CD4-positive, alpha-beta T cell (primary cell): ENCODE measurements at regions of chr6 and their contacts with region 1.

Region 1: DNA sequence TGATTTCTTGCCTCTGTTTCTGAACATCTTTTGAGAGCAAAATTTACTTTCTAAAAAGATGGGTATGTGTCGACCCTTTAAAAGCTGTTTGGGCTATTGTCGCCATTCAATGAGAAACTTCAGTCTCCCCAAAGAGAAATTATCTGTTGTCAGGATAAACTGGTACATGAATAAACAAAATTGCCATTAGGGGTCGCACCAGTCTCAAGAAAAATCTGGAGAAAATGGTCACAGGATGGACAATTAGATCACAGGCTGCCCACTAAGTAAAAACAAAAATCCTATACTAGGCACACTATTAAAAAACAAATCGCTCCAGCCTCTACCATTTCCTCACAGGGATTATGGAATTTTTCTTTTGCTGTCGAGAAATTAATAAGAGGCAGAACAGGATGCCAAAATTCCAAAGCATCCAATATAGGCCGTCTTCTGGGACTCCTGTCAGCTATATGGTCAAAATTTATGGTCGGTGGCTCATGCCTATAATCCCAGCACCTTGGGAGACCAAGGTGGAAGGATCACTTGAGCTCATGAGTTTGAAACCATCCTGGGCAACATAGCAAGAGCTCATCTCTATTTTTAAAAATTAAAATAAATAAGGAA is 5.5 kb upstream of the HLA-E start:
- DNase-seq: peak in 5 of 14 experiments; percentile 17 to 78 (median 68)
- ATAC-seq: no peak
- H3K4me3 ChIP-seq: no peak overlapping the region
- H3K4me3 Mint-ChIP-seq: no peak overlapping the region
- H3K27ac ChIP-seq: no peak overlapping the region
- H3K27ac Mint-ChIP-seq: no peak overlapping the region
- H3K4me1 ChIP-seq: peaks cover 36% of the 10 kb centered on the region
- H3K4me1 Mint-ChIP-seq: peaks cover 44% of the 10 kb centered on the region
- H3K27me3 ChIP-seq: peaks cover 18 to 28% of the 10 kb centered on the region in 2 experiments
- H3K27me3 Mint-ChIP-seq: peaks cover 42% of the 10 kb centered on the region
- CTCF ChIP-seq: peak; percentile 94

Region 2: GRCh38 chr6:30463651-30464618 is 19.8 kb before region 1 on chr6:
- CTCF ChIA-PET with region 1: interaction called, 10 read pairs
- POLR2A ChIA-PET with region 1: interaction called, 5 read pairs
- intact Hi-C with region 1: no loop called
- DNase-seq: peak in 13 of 14 experiments; percentile 31 to 87 (median 59)
- ATAC-seq: peak; percentile 50
- H3K4me3 ChIP-seq: peak overlapping the region; percentile 35
- H3K4me3 Mint-ChIP-seq: peak overlapping the region; percentile 47
- H3K27ac ChIP-seq: no peak overlapping the region
- H3K27ac Mint-ChIP-seq: no peak overlapping the region
- H3K4me1 ChIP-seq: peaks cover 58% of the 10 kb centered on the region
- H3K4me1 Mint-ChIP-seq: peaks cover 54% of the 10 kb centered on the region
- H3K27me3 ChIP-seq: peaks cover 78 to 93% of the 10 kb centered on the region in 2 experiments
- H3K27me3 Mint-ChIP-seq: peaks cover 90% of the 10 kb centered on the region
- CTCF ChIP-seq: no peak

Region 3: GRCh38 chr6:30556066-30556905 is 72.5 kb after region 1 on chr6 and contains the start of gene GNL1:
- CTCF ChIA-PET with region 1: interaction called, 7 read pairs
- POLR2A ChIA-PET with region 1: interaction called, 12 read pairs
- intact Hi-C with region 1: no loop called
- DNase-seq: peak; percentile 98 to 100 (median 99)
- ATAC-seq: peak; percentile 88
- H3K4me3 ChIP-seq: peak within 1 kb of the TSS; percentile 86
- H3K4me3 Mint-ChIP-seq: peak within 1 kb of the TSS; percentile 98
- H3K27ac ChIP-seq: peak within 1 kb of the TSS; percentile 94 to 97
- H3K27ac Mint-ChIP-seq: peak within 1 kb of the TSS; percentile 97
- H3K4me1 ChIP-seq: peaks cover 27% of the 10 kb centered on the region
- H3K4me1 Mint-ChIP-seq: peaks cover 50% of the 10 kb centered on the region
- H3K27me3 ChIP-seq: no peaks in the 10 kb centered on the region
- H3K27me3 Mint-ChIP-seq: no peaks in the 10 kb centered on the region
- CTCF ChIP-seq: no peak
- total RNA-seq, gene GNL1: 145 to 151 TPM

Region 4: GRCh38 chr6:30640476-30640875 is 156.7 kb after region 1 on chr6:
- CTCF ChIA-PET with region 1: no interaction called
- POLR2A ChIA-PET with region 1: no interaction called
- intact Hi-C with region 1: no loop called
- DNase-seq: peak in 1 of 14 experiments; percentile 29
- ATAC-seq: peak; percentile 37
- H3K4me3 ChIP-seq: no peak overlapping the region
- H3K4me3 Mint-ChIP-seq: no peak overlapping the region
- H3K27ac ChIP-seq: no peak overlapping the region
- H3K27ac Mint-ChIP-seq: no peak overlapping the region
- H3K4me1 ChIP-seq: peaks cover 6% of the 10 kb centered on the region
- H3K4me1 Mint-ChIP-seq: peaks cover 13% of the 10 kb centered on the region
- H3K27me3 ChIP-seq: no peaks in the 10 kb centered on the region
- H3K27me3 Mint-ChIP-seq: no peaks in the 10 kb centered on the region
- CTCF ChIP-seq: no peak

Region 5: DNA sequence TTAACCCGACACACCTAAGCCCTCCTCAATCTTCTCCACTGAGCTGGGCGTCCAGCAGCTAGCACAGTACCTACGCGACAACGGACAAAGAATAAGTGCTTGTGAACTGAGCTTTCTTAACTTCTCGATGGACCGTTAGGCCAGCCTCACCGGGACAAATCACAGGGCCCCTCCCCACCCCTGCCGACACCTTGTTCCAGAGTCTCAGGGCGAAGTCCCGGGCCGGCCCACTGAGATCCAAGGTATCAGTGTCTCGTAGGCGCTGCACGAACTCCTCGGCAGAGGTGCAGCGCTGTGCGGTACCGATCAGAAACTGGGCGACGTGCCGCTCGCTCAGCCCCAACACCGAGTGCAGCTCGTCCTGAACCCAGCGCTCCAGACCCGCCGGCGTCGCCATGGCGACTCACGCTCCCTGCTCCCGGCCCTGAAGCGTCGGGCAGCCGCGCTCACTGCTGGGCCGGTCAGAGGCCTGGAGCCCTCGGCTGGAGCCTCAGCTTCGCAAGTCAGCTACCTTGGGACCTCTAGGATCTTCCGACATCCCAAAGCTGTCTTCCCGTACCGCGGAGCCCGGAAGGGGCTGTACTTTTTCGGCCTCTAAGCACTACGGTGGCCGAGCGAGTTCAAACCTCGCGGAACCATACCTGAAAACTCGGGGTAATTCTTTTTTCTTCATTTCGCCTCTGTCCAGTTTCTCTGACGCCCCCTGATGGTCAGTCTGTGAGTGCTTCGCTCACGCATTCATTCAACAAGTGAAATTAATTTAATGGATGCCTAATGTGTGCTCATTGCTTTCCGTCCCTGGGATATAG is 188.9 kb after region 1 on chr6 and contains the start of gene DHX16:
- CTCF ChIA-PET with region 1: interaction called, 11 read pairs
- POLR2A ChIA-PET with region 1: no interaction called
- intact Hi-C with region 1: loop called (anchors 2 kb)
- DNase-seq: peak; percentile 79 to 95 (median 84)
- ATAC-seq: peak; percentile 76
- H3K4me3 ChIP-seq: peak within 1 kb of the TSS; percentile 98
- H3K4me3 Mint-ChIP-seq: peak within 1 kb of the TSS; percentile 87
- H3K27ac ChIP-seq: peak within 1 kb of the TSS; percentile 49 to 59
- H3K27ac Mint-ChIP-seq: peak within 1 kb of the TSS; percentile 86
- H3K4me1 ChIP-seq: peaks cover 18% of the 10 kb centered on the region
- H3K4me1 Mint-ChIP-seq: peaks cover 49% of the 10 kb centered on the region
- H3K27me3 ChIP-seq: no peaks in the 10 kb centered on the region
- H3K27me3 Mint-ChIP-seq: no peaks in the 10 kb centered on the region
- CTCF ChIP-seq: peak; percentile 69
- total RNA-seq, gene DHX16: 15.9 to 16.1 TPM

Region 6: DNA sequence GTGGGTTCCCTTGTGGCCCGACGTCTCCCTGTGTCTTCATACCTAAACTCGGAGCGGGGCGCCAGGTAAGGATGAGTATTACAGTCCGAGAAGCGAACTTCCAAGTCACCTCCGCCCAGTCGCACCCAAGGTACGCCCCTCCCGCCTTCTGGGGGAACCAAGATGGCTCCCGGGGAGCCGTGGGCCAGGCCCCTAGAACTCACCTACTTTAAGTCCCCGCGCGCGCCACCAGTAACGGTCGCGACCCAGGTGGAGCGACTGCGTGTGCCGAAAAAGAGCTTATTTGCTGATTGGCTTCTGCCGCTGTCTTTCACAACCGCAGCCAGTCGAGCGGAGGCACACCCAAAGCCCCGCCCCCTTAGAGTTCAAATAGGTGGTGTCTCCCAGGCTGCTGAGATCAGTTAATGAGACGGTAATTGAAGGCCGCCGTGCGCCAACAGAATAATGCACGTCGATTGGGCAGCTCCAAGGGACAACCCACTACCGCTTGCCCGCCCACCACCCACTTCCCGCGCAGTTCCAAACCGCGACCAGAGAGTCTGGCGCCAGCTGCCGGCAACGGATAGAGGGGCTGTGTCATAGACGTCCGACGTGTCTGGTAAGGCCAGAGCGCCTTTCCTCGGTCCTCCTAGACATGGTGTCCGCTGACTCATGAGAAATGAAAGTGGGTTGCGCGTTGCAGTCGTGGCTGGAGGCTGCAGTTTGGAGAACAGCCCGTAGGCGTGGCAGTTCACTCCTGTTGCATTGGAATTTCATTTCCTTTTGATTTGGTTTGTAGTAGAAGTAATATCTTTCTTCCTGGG is 233.5 kb after region 1 on chr6 and contains the start of gene MDC1:
- CTCF ChIA-PET with region 1: interaction called, 7 read pairs
- POLR2A ChIA-PET with region 1: interaction called, 4 read pairs
- intact Hi-C with region 1: loop called (anchors 2 kb)
- DNase-seq: peak; percentile 96 to 100 (median 98)
- ATAC-seq: peak; percentile 73
- H3K4me3 ChIP-seq: peak within 1 kb of the TSS; percentile 81
- H3K4me3 Mint-ChIP-seq: peak within 1 kb of the TSS; percentile 95
- H3K27ac ChIP-seq: peak within 1 kb of the TSS; percentile 86 to 90
- H3K27ac Mint-ChIP-seq: peak within 1 kb of the TSS; percentile 96
- H3K4me1 ChIP-seq: peaks cover 42% of the 10 kb centered on the region
- H3K4me1 Mint-ChIP-seq: peaks cover 45% of the 10 kb centered on the region
- H3K27me3 ChIP-seq: no peaks in the 10 kb centered on the region
- H3K27me3 Mint-ChIP-seq: no peaks in the 10 kb centered on the region
- CTCF ChIP-seq: peak; percentile 45
- total RNA-seq, gene MDC1: 50.5 to 56.8 TPM

Region 7: DNA sequence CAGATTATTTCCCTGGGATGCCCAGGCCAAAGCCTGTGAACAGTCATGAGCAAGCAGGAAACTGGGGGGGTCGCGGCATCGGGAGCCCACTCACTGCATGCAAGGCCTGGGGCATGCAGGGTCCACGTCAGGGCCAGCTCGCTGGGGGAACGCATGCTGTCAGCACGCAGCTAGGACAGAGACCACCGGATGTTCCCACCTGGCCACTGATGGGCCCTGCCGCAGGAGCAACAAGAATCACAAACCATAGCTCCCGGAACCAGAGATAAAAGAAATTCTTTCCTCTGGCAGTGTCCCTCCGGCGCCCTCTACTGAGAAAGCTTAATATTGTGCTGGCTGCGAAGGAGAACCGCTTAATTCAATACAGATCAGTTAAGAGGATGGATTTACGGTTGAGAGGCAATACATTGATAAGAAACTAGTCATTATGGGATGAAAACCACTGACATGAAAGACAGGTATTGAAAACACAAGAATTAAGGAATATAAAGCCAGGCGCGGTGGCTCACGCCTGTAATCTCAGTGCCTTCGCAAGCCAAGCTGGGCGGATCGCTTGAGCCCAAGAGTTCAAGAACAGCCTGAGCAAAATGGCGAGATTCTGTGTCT is 596.0 kb after region 1 on chr6:
- CTCF ChIA-PET with region 1: no interaction called
- POLR2A ChIA-PET with region 1: no interaction called
- intact Hi-C with region 1: loop called in 1 of 2 experiments (anchors 5 kb)
- DNase-seq: peak; percentile 52 to 82 (median 63)
- ATAC-seq: peak; percentile 94
- H3K4me3 ChIP-seq: peak overlapping the region; percentile 35
- H3K4me3 Mint-ChIP-seq: peak overlapping the region; percentile 61
- H3K27ac ChIP-seq: no peak overlapping the region
- H3K27ac Mint-ChIP-seq: no peak overlapping the region
- H3K4me1 ChIP-seq: peaks cover 9% of the 10 kb centered on the region
- H3K4me1 Mint-ChIP-seq: peaks cover 9% of the 10 kb centered on the region
- H3K27me3 ChIP-seq: no peaks in the 10 kb centered on the region
- H3K27me3 Mint-ChIP-seq: peaks cover 5% of the 10 kb centered on the region
- CTCF ChIP-seq: peak; percentile 96